PC-9 (cell line): ENCODE measurements at regions of chr6 and their contacts with region 1.

Region 1: GRCh38 chr6:19492636-19493405 is 344.3 kb upstream of the ID4 start:
- DNase-seq: peak in 1 of 2 experiments; percentile 72
- H3K4me3 ChIP-seq: no peak overlapping the region
- H3K27ac ChIP-seq: peak overlapping the region; percentile 47
- H3K4me1 ChIP-seq: peaks cover 12% of the 10 kb centered on the region
- H3K27me3 ChIP-seq: no peaks in the 10 kb centered on the region
- CTCF ChIP-seq: no peak

Region 2: GRCh38 chr6:19070520-19070919 is 422.3 kb before region 1 on chr6:
- CTCF ChIA-PET with region 1: no interaction called
- POLR2A ChIA-PET with region 1: no interaction called
- intact Hi-C with region 1: no loop called
- DNase-seq: no peak
- H3K4me3 ChIP-seq: no peak overlapping the region
- H3K27ac ChIP-seq: no peak overlapping the region
- H3K4me1 ChIP-seq: no peaks in the 10 kb centered on the region
- H3K27me3 ChIP-seq: no peaks in the 10 kb centered on the region
- CTCF ChIP-seq: no peak

Region 3: GRCh38 chr6:19415585-19416326 is 77.1 kb before region 1 on chr6:
- CTCF ChIA-PET with region 1: no interaction called
- POLR2A ChIA-PET with region 1: interaction called, 17 read pairs
- intact Hi-C with region 1: no loop called
- DNase-seq: peak; percentile 60 to 94
- H3K4me3 ChIP-seq: peak overlapping the region; percentile 16; the same call in 1 of the 2 replicates
- H3K27ac ChIP-seq: peak overlapping the region; percentile 91
- H3K4me1 ChIP-seq: peaks cover 57% of the 10 kb centered on the region
- H3K27me3 ChIP-seq: no peaks in the 10 kb centered on the region
- CTCF ChIP-seq: no peak